ENCODE measurements at regions of chr19 and their contacts with region 1.

Region 1: GRCh38 chr19:1260636-1261537 is 8.2 kb upstream of the CIRBP start:
- DNase-seq: peak; percentile 96 to 97
- H3K4me3 ChIP-seq: peak overlapping the region; percentile 65
- H3K4me3 Mint-ChIP-seq: peak overlapping the region; percentile 78
- H3K27ac Mint-ChIP-seq: peak overlapping the region; percentile 98
- H3K4me1 ChIP-seq: peaks cover 66% of the 10 kb centered on the region
- H3K4me1 Mint-ChIP-seq: peaks cover 24% of the 10 kb centered on the region
- H3K27me3 ChIP-seq: no peaks in the 10 kb centered on the region
- H3K27me3 Mint-ChIP-seq: no peaks in the 10 kb centered on the region
- CTCF ChIP-seq: no peak

Region 2: GRCh38 chr19:1241417-1242095 is 19.3 kb before region 1 on chr19 and contains the start of gene ATP5F1D:
- CTCF ChIA-PET with region 1: interaction called, 440 read pairs
- POLR2A ChIA-PET with region 1: interaction called, 70 read pairs
- intact Hi-C with region 1: no loop called
- DNase-seq: peak; percentile 92
- H3K4me3 ChIP-seq: peak within 1 kb of the TSS; percentile 45
- H3K4me3 Mint-ChIP-seq: peak within 1 kb of the TSS; percentile 76
- H3K27ac Mint-ChIP-seq: peak within 1 kb of the TSS; percentile 81
- H3K4me1 ChIP-seq: peaks cover 43% of the 10 kb centered on the region
- H3K4me1 Mint-ChIP-seq: no peaks in the 10 kb centered on the region
- H3K27me3 ChIP-seq: no peaks in the 10 kb centered on the region
- H3K27me3 Mint-ChIP-seq: no peaks in the 10 kb centered on the region
- CTCF ChIP-seq: no peak
- total RNA-seq, gene ATP5F1D: 126 and 140 TPM in 2 replicates

Region 3: GRCh38 chr19:1249298-1249989 is 11.4 kb before region 1 on chr19:
- CTCF ChIA-PET with region 1: interaction called, 440 read pairs
- POLR2A ChIA-PET with region 1: interaction called, 70 read pairs
- intact Hi-C with region 1: loop called (anchors 1 kb)
- DNase-seq: peak; percentile 92
- H3K4me3 ChIP-seq: peak overlapping the region; percentile 88
- H3K4me3 Mint-ChIP-seq: peak overlapping the region; percentile 96
- H3K27ac Mint-ChIP-seq: no peak overlapping the region
- H3K4me1 ChIP-seq: peaks cover 35% of the 10 kb centered on the region
- H3K4me1 Mint-ChIP-seq: peaks cover 6% of the 10 kb centered on the region
- H3K27me3 ChIP-seq: no peaks in the 10 kb centered on the region
- H3K27me3 Mint-ChIP-seq: no peaks in the 10 kb centered on the region
- CTCF ChIP-seq: no peak

Region 4: DNA sequence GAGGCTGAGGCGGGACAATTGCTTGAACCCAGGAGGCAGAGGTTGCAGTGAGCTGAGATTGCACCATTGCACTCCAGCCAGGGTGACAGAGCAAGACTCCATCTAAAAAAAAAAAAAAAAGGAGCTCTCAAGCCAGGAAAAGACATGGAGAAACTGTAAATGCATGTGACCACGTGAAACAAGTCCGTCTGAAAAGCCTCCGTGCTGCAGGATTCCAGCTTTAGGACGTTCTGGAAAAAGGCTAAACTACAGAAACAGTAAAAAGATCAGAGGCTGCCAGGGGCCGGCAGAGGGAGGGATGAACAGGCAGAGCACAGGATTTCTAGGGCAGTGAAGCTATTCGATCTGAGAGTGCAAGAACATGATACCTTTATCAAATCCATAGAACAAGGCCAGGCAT is 82.2 kb after region 1 on chr19:
- CTCF ChIA-PET with region 1: no interaction called
- POLR2A ChIA-PET with region 1: no interaction called
- intact Hi-C with region 1: no loop called
- DNase-seq: no peak
- H3K4me3 ChIP-seq: no peak overlapping the region
- H3K4me3 Mint-ChIP-seq: no peak overlapping the region
- H3K27ac Mint-ChIP-seq: no peak overlapping the region
- H3K4me1 ChIP-seq: no peaks in the 10 kb centered on the region
- H3K4me1 Mint-ChIP-seq: no peaks in the 10 kb centered on the region
- H3K27me3 ChIP-seq: no peaks in the 10 kb centered on the region
- H3K27me3 Mint-ChIP-seq: no peaks in the 10 kb centered on the region
- CTCF ChIP-seq: no peak